ENCODE measurements at regions of chr21 and their contacts with region 1.

Region 1: GRCh38 chr21:44285509-44285992 is at the start of gene AIRE:
- DNase-seq: no peak
- H3K4me3 ChIP-seq: peak within 1 kb of the TSS; percentile 6 to 57 (median 26)
- H3K27ac ChIP-seq: no peak within 1 kb of the TSS
- H3K4me1 ChIP-seq: peaks cover 0 to 23% (median 15%) of the 10 kb centered on the region in 4 experiments; a peak in 6 of 7 replicates
- H3K27me3 ChIP-seq: peaks cover 0 to 28% (median 17%) of the 10 kb centered on the region in 4 experiments; a peak in 5 of 7 replicates
- CTCF ChIP-seq: no peak
- EP300 ChIP-seq: no peak
- POLR2A ChIP-seq: no peak
- RAD21 ChIP-seq: no peak
- total RNA-seq, gene AIRE: 0.10 TPM in 1 of 2 replicates, not detected in the other

Region 2: GRCh38 chr21:44089001-44089911 is 196.3 kb before region 1 on chr21:
- CTCF ChIA-PET with region 1: no interaction called
- POLR2A ChIA-PET with region 1: no interaction called
- DNase-seq: peak in 1 of 2 experiments; percentile 17
- H3K4me3 ChIP-seq: no peak overlapping the region
- H3K27ac ChIP-seq: no peak overlapping the region
- H3K4me1 ChIP-seq: no peaks in the 10 kb centered on the region
- H3K27me3 ChIP-seq: no peaks in the 10 kb centered on the region
- CTCF ChIP-seq: no peak
- EP300 ChIP-seq: no peak
- POLR2A ChIP-seq: no peak
- RAD21 ChIP-seq: no peak

Region 3: GRCh38 chr21:44267655-44268142 is 17.9 kb before region 1 on chr21:
- CTCF ChIA-PET with region 1: interaction called, 11 read pairs
- POLR2A ChIA-PET with region 1: interaction called, 3 read pairs
- DNase-seq: peak in 1 of 2 experiments; percentile 66
- H3K4me3 ChIP-seq: no peak overlapping the region
- H3K27ac ChIP-seq: no peak overlapping the region
- H3K4me1 ChIP-seq: peaks cover 0 to 7% (median 4%) of the 10 kb centered on the region in 4 experiments; a peak in 6 of 7 replicates
- H3K27me3 ChIP-seq: no peaks in the 10 kb centered on the region
- CTCF ChIP-seq: peak; percentile 49 to 66 (median 50)
- EP300 ChIP-seq: no peak
- POLR2A ChIP-seq: no peak
- RAD21 ChIP-seq: peak; percentile 56 to 64

Region 4: DNA sequence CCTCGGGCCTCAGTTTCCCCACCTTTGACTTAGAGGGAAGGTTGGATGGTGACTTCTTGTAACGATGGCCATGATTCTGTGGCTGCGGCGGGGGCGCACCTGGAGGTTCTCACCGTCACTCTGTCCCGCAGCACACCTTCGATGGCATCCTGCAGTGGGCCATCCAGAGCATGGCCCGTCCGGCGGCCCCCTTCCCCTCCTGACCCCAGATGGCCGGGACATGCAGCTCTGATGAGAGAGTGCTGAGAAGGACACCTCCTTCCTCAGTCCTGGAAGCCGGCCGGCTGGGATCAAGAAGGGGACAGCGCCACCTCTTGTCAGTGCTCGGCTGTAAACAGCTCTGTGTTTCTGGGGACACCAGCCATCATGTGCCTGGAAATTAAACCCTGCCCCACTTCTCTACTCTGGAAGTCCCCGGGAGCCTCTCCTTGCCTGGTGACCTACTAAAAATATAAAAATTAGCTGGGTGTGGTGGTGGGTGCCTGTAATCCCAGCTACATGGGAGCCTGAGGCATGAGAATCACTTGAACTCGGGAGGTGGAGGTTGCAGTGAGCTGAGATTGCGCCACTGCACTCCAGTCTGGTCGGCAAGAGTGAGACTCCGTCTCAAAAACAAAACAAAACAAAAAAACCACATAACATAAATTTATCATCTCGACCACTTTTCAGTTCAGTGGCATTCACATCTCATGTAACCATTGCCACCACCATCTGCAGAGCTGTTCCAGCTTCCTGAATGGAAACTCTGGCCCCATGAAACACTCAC is 12.2 kb after region 1 on chr21:
- CTCF ChIA-PET with region 1: interaction called, 53 read pairs
- POLR2A ChIA-PET with region 1: interaction called, 3 read pairs
- DNase-seq: peak; percentile 49 to 87
- H3K4me3 ChIP-seq: no peak overlapping the region
- H3K27ac ChIP-seq: no peak overlapping the region
- H3K4me1 ChIP-seq: peaks cover 0 to 15% (median 5%) of the 10 kb centered on the region in 4 experiments; a peak in 5 of 7 replicates
- H3K27me3 ChIP-seq: peaks cover 0 to 3% (median 0%) of the 10 kb centered on the region in 4 experiments; a peak in 2 of 7 replicates
- CTCF ChIP-seq: peak in 2 of 3 experiments; percentile 88 to 91; a peak in 3 of 4 replicates
- EP300 ChIP-seq: no peak
- POLR2A ChIP-seq: no peak
- RAD21 ChIP-seq: peak; percentile 92 to 93

Region 5: GRCh38 chr21:44310628-44311511 is 25.3 kb after region 1 on chr21:
- CTCF ChIA-PET with region 1: no interaction called
- POLR2A ChIA-PET with region 1: no interaction called
- DNase-seq: no peak
- H3K4me3 ChIP-seq: no peak overlapping the region
- H3K27ac ChIP-seq: no peak overlapping the region
- H3K4me1 ChIP-seq: no peaks in the 10 kb centered on the region
- H3K27me3 ChIP-seq: no peaks in the 10 kb centered on the region
- CTCF ChIP-seq: no peak
- EP300 ChIP-seq: no peak
- POLR2A ChIP-seq: no peak
- RAD21 ChIP-seq: 0 out of 4 replicates have a peak, but pooled peaks of 1 of the 2 experiments have one; percentile 2

Region 6: DNA sequence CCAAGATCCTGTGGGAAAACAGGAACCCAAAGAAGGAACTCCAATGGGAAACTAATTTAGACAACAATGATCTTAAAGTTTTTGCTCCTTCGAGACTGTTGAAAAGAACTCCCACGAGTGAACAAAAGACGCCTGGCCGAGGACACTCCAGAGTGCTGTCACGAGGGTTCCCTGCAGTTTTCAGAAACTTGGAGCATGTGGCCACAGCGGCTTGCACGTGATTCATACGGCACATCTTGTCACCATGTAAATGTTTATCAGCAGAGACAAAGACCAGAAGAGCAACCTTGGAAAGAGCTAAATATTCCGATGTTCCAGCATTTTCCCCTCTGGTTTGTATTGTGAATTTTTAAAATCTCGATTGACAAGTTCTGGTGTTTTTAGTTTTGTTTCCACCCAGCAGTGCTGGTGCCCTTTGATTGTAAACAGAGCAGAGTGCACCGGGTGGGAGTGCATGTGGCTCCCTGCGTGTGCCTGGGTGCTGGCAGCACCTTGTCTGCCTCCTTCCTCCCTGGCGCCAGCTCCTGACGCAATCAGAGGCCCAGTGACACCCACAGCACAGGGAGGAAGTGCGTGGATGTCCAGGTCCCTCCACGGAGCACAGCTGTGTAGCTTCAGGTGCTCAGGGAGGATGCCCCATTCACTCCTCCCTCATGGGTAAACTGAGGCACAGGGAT is 192.7 kb after region 1 on chr21:
- CTCF ChIA-PET with region 1: no interaction called
- POLR2A ChIA-PET with region 1: no interaction called
- DNase-seq: no peak
- H3K4me3 ChIP-seq: no peak overlapping the region
- H3K27ac ChIP-seq: no peak overlapping the region
- H3K4me1 ChIP-seq: no peaks in the 10 kb centered on the region; a peak in 1 of 7 replicates
- H3K27me3 ChIP-seq: no peaks in the 10 kb centered on the region
- CTCF ChIP-seq: no peak
- EP300 ChIP-seq: no peak
- POLR2A ChIP-seq: no peak
- RAD21 ChIP-seq: no peak